CD14-positive monocyte (primary cell): ENCODE measurements at regions of chr6 and their contacts with region 1.

Region 1: DNA sequence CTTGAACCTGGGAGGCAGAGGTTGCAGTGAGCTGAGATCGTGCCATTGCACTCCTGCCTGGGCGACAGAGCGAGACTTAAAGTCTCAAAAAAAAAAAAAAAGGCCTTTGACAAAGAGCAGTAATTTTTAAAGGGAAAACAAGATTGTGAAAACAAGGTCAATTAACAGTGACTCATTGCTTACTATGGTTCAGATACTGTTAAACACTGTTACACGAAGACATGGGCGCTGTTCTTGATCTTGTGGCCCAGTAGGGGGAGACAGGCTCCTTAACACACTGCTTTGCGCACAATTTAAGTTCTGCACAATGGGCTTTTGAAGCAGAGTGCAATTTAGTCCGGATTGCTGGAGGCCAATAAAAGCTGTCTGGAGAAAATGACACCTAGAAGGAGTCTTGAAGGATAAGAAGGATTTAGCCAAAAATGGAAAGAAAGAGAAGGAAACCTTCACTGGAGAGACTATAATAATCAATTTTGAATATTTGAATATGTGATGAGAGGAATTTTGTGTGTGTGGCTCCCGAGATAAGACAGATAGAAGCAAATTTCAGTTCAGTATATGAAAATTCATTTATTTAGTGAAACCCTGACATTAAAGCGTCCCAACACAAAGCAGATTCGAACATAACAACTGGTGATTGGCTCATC is 6.0 kb upstream of the LATS1 start:
- DNase-seq: peak; percentile 60 to 81 (median 77)
- H3K4me3 ChIP-seq: no peak overlapping the region
- H3K4me3 Mint-ChIP-seq: no peak overlapping the region
- H3K27ac ChIP-seq: no peak overlapping the region
- H3K27ac Mint-ChIP-seq: peak overlapping the region in 4 of 7 donors; percentile 33 to 68 (median 46)
- H3K4me1 ChIP-seq: peaks cover 21 to 33% of the 10 kb centered on the region in 2 donors
- H3K4me1 Mint-ChIP-seq: peaks cover 28% of the 10 kb centered on the region
- H3K27me3 ChIP-seq: no peaks in the 10 kb centered on the region
- H3K27me3 Mint-ChIP-seq: peaks cover 0 to 2% (median 1%) of the 10 kb centered on the region in 3 donors
- CTCF ChIP-seq: peak; percentile 85

Region 2: GRCh38 chr6:149565527-149566409 is 158.1 kb before region 1 on chr6 and contains the start of gene GINM1:
- intact Hi-C with region 1: loop called in 1 of 2 experiments (anchors 10 kb)
- DNase-seq: peak; percentile 88 to 95 (median 88)
- H3K4me3 ChIP-seq: peak within 1 kb of the TSS; percentile 78 to 99 (median 84)
- H3K4me3 Mint-ChIP-seq: peak within 1 kb of the TSS; percentile 93 to 95
- H3K27ac ChIP-seq: peak within 1 kb of the TSS; percentile 82 to 86
- H3K27ac Mint-ChIP-seq: peak within 1 kb of the TSS; percentile 78 to 88 (median 82)
- H3K4me1 ChIP-seq: peaks cover 19 to 24% of the 10 kb centered on the region in 2 donors
- H3K4me1 Mint-ChIP-seq: peaks cover 17% of the 10 kb centered on the region
- H3K27me3 ChIP-seq: peaks cover 2 to 17% of the 10 kb centered on the region in 2 donors
- H3K27me3 Mint-ChIP-seq: peaks cover 8 to 19% (median 11%) of the 10 kb centered on the region in 3 donors
- CTCF ChIP-seq: peak; percentile 58
- polyA plus RNA-seq, gene GINM1: 17.0 to 44.4 (median 42.3) TPM

Region 3: DNA sequence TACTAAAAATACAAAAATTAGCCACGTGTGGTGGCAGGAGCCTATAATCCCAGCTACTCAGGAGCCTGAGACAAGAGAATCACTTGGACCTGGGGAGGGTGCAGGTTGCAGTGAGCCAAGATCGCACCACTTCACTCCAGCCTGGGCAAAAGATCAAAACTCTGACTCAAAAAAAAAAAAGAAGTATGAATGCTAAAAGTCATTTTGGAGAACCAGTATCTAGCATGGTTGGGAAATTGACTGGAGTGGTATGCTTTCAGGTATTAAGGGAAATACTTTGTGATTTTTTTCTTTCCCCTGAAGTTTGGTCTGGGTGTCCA is 55.7 kb after region 1 on chr6:
- intact Hi-C with region 1: loop called in 1 of 2 experiments (anchors 10 kb)
- DNase-seq: no peak
- H3K4me3 ChIP-seq: no peak overlapping the region
- H3K4me3 Mint-ChIP-seq: no peak overlapping the region
- H3K27ac ChIP-seq: peak overlapping the region in 1 of 2 donors; percentile 36
- H3K27ac Mint-ChIP-seq: peak overlapping the region in 1 of 7 donors; percentile 69
- H3K4me1 ChIP-seq: no peaks in the 10 kb centered on the region
- H3K4me1 Mint-ChIP-seq: peaks cover 3% of the 10 kb centered on the region
- H3K27me3 ChIP-seq: no peaks in the 10 kb centered on the region
- H3K27me3 Mint-ChIP-seq: no peaks in the 10 kb centered on the region
- CTCF ChIP-seq: no peak

Region 4: DNA sequence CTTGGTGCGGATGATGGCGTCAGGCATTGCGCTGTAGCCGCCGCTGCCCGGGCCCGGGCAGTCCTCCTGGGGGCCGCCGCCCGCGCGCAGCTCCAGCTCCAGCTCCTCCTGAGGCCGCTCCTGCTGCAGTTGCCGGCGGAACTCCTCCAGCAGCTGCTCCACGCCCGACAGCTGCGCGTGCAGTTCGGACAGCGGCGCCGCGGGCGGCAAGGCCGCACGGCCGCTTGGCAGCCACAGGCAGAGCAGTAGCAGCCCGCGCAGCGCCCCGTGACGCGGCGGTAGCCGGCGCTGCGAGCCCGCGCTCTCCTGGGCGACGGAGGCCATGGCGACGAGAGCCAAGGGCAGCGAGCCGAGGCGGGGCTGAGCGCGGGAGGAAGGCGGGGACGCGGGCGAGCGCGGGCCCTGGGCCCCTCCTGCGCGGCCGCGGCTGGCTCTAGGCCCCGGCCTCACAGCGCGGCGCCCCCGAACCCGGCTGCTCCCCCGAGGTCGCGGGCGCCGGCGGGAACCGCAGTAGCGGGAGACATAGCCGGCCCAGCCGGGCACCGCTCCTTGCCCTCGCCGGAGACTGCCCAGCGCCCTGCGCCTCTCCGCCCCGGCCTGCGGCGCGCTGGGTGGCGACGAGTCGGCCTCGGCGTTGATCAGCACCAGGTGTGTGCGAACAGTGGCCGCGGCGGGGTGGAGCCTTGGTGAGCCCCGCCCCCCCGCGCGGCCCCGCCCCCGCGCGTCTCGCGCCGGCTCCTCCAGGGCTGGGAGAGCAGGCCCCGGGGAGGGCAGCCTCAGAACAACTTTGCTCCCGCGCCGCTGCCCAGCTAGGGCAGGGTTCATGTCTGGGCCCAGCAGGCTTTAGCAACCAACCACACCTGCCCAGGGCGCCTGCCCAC is 140.0 kb after region 1 on chr6 and contains the start of gene LRP11:
- intact Hi-C with region 1: loop called in 1 of 2 experiments (anchors 10 kb)
- DNase-seq: peak; percentile 25 to 52 (median 45)
- H3K4me3 ChIP-seq: peak within 1 kb of the TSS; percentile 42 to 75 (median 57)
- H3K4me3 Mint-ChIP-seq: peak within 1 kb of the TSS; percentile 77 to 91
- H3K27ac ChIP-seq: no peak within 1 kb of the TSS
- H3K27ac Mint-ChIP-seq: peak within 1 kb of the TSS in 3 of 7 donors; percentile 20 to 27 (median 25)
- H3K4me1 ChIP-seq: peaks cover 16 to 26% of the 10 kb centered on the region in 2 donors
- H3K4me1 Mint-ChIP-seq: peaks cover 21% of the 10 kb centered on the region
- H3K27me3 ChIP-seq: no peaks in the 10 kb centered on the region
- H3K27me3 Mint-ChIP-seq: peaks cover 3 to 11% (median 3%) of the 10 kb centered on the region in 3 donors
- CTCF ChIP-seq: no peak
- polyA plus RNA-seq, gene LRP11: 0.20 to 0.41 (median 0.32) TPM

Region 5: DNA sequence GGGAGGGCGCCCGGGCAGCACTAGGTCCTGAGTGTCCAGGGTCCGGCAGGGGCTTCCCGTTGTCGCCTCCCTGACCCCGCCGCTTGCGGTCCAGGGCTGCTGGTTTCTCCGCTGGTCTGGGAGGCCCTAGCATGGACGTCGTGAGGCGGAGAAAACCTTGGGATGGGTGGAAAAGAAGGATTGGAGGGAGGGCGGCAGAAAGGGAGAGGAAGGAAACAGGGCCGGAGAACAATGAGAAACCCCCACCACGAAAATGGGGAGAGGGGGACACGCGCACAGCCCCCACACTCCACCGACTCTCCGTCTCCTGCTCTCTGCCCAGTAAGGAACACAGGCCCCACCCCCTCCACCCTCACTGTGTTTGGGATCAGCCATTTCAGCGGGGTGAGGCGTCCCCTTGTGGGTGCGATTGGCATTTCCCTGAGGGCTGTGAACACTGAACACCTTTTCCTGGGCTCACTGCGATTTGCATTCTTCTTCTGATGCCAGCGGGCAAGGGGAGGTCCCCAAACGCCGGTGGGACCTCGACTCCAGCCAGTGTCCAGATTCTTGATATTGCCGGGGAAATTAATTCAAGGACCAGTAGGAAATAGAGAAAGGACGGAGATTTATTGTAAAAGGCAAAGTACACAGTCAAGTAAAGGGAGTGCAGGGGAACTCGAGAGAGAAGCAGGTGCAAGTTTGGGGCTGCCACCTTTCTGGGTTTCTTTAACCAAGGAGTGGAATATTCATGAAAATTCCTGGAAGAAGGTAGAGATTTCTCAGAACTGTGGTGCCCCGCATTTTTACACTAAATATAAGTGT is 202.3 kb after region 1 on chr6:
- intact Hi-C with region 1: loop called in 1 of 2 experiments (anchors 10 kb)
- DNase-seq: peak; percentile 33 to 63 (median 52)
- H3K4me3 ChIP-seq: peak overlapping the region; percentile 36 to 73 (median 48)
- H3K4me3 Mint-ChIP-seq: peak overlapping the region; percentile 77 to 96
- H3K27ac ChIP-seq: no peak overlapping the region
- H3K27ac Mint-ChIP-seq: peak overlapping the region in 2 of 7 donors; percentile 39 to 50
- H3K4me1 ChIP-seq: peaks cover 28 to 29% of the 10 kb centered on the region in 2 donors
- H3K4me1 Mint-ChIP-seq: peaks cover 31% of the 10 kb centered on the region
- H3K27me3 ChIP-seq: peaks cover 38 to 85% of the 10 kb centered on the region in 2 donors
- H3K27me3 Mint-ChIP-seq: peaks cover 85 to 93% (median 86%) of the 10 kb centered on the region in 3 donors
- CTCF ChIP-seq: peak; percentile 77